Activated T-helper 2 cell treated with anti-CD3 and anti-CD28 coated beads, Interferon-gamma antibody, Interleukin-2, Interleukin-4, amounts not matched to agents 10 μg/mL and 5 μg/mL and 100 μg/mL, durations not matched to agents 14 hours and 24 hours and 36 hours (primary cell): ENCODE measurements at regions of chr7 and their contacts with region 1.

Region 1: DNA sequence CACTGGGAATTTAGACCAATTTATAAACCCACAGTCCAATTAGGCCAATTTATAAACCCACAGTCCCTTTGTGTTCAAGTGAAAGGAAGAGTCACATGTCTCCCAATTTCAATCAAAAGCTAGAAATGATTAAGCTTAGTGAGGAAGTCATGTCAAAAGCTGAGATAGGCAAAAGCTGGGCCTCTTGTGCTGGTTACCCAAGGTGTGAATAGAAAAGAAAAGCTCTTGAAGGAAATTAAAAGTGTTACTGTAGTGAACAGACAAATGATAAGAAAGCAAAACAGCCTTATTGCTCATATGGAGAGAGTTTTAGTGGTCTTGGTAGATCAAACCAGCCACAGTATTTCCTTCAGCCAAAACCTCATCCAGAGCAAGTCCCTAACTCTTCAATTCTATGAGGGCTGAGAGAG is 245.0 kb downstream of the HDAC9 start:
- DNase-seq: no peak
- H3K4me3 Mint-ChIP-seq: no peak overlapping the region
- H3K27ac Mint-ChIP-seq: peak overlapping the region; percentile 25
- H3K4me1 Mint-ChIP-seq: peaks cover 4% of the 10 kb centered on the region
- H3K27me3 Mint-ChIP-seq: no peaks in the 10 kb centered on the region

Region 2: GRCh38 chr7:17898111-17898510 is 842.5 kb before region 1 on chr7:
- intact Hi-C with region 1: no loop called
- DNase-seq: no peak
- H3K4me3 Mint-ChIP-seq: no peak overlapping the region
- H3K27ac Mint-ChIP-seq: no peak overlapping the region
- H3K4me1 Mint-ChIP-seq: no peaks in the 10 kb centered on the region
- H3K27me3 Mint-ChIP-seq: no peaks in the 10 kb centered on the region

Region 3: DNA sequence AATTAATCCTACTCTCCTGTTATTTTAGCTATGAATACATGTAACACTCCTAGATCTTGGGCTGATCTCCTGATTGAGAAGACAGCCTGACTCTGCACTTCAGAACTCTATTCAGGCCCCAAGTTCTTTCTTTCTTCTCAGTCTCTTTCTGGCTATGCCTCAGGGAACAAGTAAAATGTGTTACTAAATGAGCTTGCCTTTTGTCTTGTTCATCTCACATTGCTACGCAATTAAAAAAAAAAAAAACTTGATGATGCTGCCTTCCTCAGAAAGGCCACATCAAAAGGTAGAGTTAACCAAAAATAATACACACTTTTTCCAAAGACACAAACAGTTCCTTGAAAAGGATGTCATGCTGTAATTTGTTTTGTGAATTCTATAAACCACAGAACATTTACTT is 118.7 kb after region 1 on chr7:
- intact Hi-C with region 1: loop called (anchors 10 kb)
- DNase-seq: no peak
- H3K4me3 Mint-ChIP-seq: no peak overlapping the region
- H3K27ac Mint-ChIP-seq: peak overlapping the region; percentile 86
- H3K4me1 Mint-ChIP-seq: peaks cover 10% of the 10 kb centered on the region
- H3K27me3 Mint-ChIP-seq: no peaks in the 10 kb centered on the region